B cell (primary cell): ENCODE measurements at regions of chr17 and their contacts with region 1.

Region 1: DNA sequence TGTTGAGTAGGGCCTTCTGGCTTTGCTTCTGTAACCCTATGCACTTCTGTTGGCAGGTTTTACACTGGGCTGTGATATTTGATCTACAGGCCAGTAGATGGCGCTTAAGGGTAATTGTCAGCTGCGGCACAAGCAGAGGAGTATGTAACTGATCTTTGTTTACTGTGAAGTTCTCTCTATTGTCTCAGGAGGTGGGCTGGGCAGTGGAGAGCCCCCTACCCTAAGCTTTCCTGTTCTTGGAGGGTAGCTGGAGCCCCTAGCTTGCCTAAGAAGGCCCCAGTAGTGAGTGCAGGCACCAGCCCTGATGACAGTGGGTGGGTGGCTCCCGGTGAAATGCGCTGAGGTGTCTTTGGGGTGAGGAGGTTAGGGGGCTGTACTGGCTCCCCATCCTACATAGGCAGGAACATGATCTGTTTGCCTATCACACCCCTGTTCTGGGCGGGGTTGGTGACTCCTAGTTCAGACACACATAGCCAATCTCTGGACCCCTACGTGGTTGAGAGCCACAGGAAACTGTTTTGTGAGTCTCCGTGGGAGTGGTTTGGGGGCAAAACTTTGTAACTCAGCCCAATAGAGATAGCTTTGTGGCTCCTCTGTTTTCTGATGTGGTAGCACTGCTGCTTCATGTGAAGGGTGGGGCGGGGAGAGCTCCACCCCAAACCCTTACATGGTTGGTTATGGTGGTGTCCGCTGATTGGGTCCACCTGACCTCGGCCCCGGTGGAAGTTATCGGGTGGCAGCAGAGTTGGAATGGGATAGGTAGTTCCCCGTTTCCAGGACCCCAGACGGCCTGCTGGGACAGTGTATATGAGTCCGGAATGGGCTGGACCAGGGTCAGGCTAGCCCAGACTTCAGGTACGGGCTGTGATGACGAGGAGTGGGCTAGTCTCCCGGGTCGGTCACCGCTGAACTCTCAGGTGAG is 60.4 kb downstream of the SLFN11 start:
- DNase-seq: peak; percentile 86
- ATAC-seq: peak; percentile 82
- H3K4me3 ChIP-seq: peak overlapping the region; percentile 19 to 77 (median 50)
- H3K4me3 Mint-ChIP-seq: peak overlapping the region; percentile 94
- H3K27ac ChIP-seq: peak overlapping the region; percentile 2 to 36
- H3K27ac Mint-ChIP-seq: peak overlapping the region; percentile 92
- H3K4me1 ChIP-seq: peaks cover 8 to 17% of the 10 kb centered on the region in 2 donors
- H3K4me1 Mint-ChIP-seq: peaks cover 18% of the 10 kb centered on the region
- H3K27me3 ChIP-seq: peaks cover 0 to 4% (median 0%) of the 10 kb centered on the region in 4 experiments
- H3K27me3 Mint-ChIP-seq: no peaks in the 10 kb centered on the region
- CTCF ChIP-seq: peak; percentile 86

Region 2: GRCh38 chr17:35273684-35274083 is 39.4 kb before region 1 on chr17:
- CTCF ChIA-PET with region 1: no interaction called
- POLR2A ChIA-PET with region 1: no interaction called
- intact Hi-C with region 1: no loop called
- DNase-seq: no peak
- ATAC-seq: no peak
- H3K4me3 ChIP-seq: no peak overlapping the region
- H3K4me3 Mint-ChIP-seq: no peak overlapping the region
- H3K27ac ChIP-seq: no peak overlapping the region
- H3K27ac Mint-ChIP-seq: no peak overlapping the region
- H3K4me1 ChIP-seq: no peaks in the 10 kb centered on the region
- H3K4me1 Mint-ChIP-seq: no peaks in the 10 kb centered on the region
- H3K27me3 ChIP-seq: peaks cover 0 to 5% (median 0%) of the 10 kb centered on the region in 4 experiments
- H3K27me3 Mint-ChIP-seq: peaks cover 22% of the 10 kb centered on the region
- CTCF ChIP-seq: no peak

Region 3: DNA sequence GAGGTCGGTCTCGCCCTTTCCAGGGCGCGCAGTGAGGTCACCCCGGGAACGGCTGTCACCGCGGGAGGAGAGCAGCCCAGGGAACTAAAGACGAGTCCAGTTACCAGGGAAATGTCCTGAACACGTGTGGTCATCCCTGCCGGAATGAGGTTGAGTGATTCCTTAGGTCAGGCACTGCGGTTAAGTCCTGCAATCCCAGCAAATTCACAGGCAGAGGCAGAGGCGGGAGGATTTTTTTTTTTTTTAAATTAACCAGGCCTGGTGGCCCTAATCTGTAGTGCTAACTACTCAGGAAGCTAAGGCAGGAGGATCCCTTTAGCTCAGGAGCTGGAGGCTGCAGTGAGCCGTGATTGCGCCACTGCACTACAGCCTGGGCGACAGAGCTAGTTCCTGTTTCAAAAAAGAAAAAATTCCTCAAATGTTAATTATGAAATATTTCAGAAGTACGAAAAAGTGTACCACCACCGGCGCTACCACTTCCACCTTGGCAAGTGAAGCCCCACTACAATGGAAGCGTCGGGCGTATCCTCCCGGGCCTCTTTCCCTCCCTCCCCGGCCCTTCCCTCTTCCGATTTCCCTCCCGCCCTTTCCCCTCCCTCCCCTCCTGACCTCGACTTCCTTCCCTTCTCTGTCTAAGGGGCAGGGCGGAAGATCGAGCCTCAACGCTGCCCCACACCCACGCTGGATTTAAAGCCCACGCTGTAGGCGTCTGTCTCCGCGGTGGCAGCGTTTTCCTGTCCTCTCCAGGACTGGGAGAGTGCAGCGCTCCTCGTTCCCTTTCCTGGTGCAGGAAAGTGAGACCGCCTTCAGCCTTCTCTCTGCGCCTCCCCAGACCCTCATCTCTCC is 33.1 kb after region 1 on chr17:
- CTCF ChIA-PET with region 1: interaction called, 9 read pairs
- POLR2A ChIA-PET with region 1: no interaction called
- intact Hi-C with region 1: loop called (anchors 2 kb)
- DNase-seq: peak; percentile 52
- ATAC-seq: peak; percentile 60
- H3K4me3 ChIP-seq: peak overlapping the region; percentile 50 to 80 (median 63)
- H3K4me3 Mint-ChIP-seq: peak overlapping the region; percentile 95
- H3K27ac ChIP-seq: peak overlapping the region; percentile 36 to 59
- H3K27ac Mint-ChIP-seq: peak overlapping the region; percentile 83
- H3K4me1 ChIP-seq: peaks cover 24 to 26% of the 10 kb centered on the region in 2 donors
- H3K4me1 Mint-ChIP-seq: peaks cover 39% of the 10 kb centered on the region
- H3K27me3 ChIP-seq: no peaks in the 10 kb centered on the region
- H3K27me3 Mint-ChIP-seq: no peaks in the 10 kb centered on the region
- CTCF ChIP-seq: no peak

Region 4: GRCh38 chr17:35432176-35433074 is 119.4 kb after region 1 on chr17 and contains the start of gene SLFN12:
- CTCF ChIA-PET with region 1: interaction called, 20 read pairs
- POLR2A ChIA-PET with region 1: interaction called, 4 read pairs
- intact Hi-C with region 1: loop called (anchors 1 kb)
- DNase-seq: peak; percentile 81
- ATAC-seq: peak; percentile 92
- H3K4me3 ChIP-seq: peak within 1 kb of the TSS; percentile 74 to 96 (median 90)
- H3K4me3 Mint-ChIP-seq: peak within 1 kb of the TSS; percentile 99
- H3K27ac ChIP-seq: peak within 1 kb of the TSS; percentile 38 to 65
- H3K27ac Mint-ChIP-seq: peak within 1 kb of the TSS; percentile 95
- H3K4me1 ChIP-seq: peaks cover 18 to 22% of the 10 kb centered on the region in 2 donors
- H3K4me1 Mint-ChIP-seq: peaks cover 24% of the 10 kb centered on the region
- H3K27me3 ChIP-seq: no peaks in the 10 kb centered on the region
- H3K27me3 Mint-ChIP-seq: no peaks in the 10 kb centered on the region
- CTCF ChIP-seq: no peak
- total RNA-seq, gene SLFN12: 8.0 and 10.4 TPM in 2 replicates

Region 5: DNA sequence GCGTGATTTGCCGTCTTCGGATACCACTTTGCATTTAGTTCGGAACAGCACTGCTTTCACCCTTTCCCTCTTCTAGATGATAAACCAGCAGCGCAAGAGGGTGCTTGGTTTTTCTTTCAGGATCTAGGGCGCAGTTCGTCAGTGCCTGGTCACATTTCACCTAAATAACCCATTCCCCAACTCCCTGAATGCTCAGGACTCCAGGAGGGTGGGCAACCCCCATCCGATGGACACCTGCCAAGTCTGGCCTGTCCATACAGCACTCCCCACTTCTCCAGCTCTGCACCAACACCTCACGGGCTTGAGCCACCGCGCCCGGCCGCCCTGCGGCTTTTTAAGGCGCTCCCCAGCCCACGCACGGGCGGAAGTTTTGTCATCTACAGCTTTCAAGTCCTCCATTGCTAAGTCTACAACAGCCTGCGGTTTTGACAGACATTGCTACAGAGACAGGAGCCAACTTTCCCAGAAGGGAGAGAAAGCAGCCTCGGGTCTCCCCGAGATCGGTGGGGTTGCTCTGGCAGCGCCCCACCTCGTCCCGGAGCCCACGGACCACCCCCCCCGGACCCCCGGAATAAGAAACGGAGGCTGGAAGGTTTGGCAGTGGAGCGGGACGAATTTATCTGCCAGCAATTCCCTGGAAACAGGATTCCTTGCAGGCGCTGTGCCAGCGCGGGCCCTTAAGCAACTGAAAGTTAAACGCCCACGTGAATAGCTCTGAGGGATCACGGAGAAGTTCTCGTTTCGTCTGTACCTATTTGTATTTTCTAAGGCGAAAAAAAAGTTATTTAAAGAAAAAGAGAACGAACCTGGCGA is 174.1 kb after region 1 on chr17:
- CTCF ChIA-PET with region 1: interaction called, 59 read pairs
- POLR2A ChIA-PET with region 1: interaction called, 7 read pairs
- intact Hi-C with region 1: loop called (anchors 1 kb)
- DNase-seq: peak; percentile 65
- ATAC-seq: peak; percentile 53
- H3K4me3 ChIP-seq: peak overlapping the region; percentile 67 to 94 (median 79)
- H3K4me3 Mint-ChIP-seq: peak overlapping the region; percentile 98
- H3K27ac ChIP-seq: no peak overlapping the region
- H3K27ac Mint-ChIP-seq: peak overlapping the region; percentile 87
- H3K4me1 ChIP-seq: peaks cover 22 to 23% of the 10 kb centered on the region in 2 donors
- H3K4me1 Mint-ChIP-seq: peaks cover 25% of the 10 kb centered on the region
- H3K27me3 ChIP-seq: peaks cover 0 to 44% (median 35%) of the 10 kb centered on the region in 4 experiments
- H3K27me3 Mint-ChIP-seq: peaks cover 36% of the 10 kb centered on the region
- CTCF ChIP-seq: no peak

Region 6: DNA sequence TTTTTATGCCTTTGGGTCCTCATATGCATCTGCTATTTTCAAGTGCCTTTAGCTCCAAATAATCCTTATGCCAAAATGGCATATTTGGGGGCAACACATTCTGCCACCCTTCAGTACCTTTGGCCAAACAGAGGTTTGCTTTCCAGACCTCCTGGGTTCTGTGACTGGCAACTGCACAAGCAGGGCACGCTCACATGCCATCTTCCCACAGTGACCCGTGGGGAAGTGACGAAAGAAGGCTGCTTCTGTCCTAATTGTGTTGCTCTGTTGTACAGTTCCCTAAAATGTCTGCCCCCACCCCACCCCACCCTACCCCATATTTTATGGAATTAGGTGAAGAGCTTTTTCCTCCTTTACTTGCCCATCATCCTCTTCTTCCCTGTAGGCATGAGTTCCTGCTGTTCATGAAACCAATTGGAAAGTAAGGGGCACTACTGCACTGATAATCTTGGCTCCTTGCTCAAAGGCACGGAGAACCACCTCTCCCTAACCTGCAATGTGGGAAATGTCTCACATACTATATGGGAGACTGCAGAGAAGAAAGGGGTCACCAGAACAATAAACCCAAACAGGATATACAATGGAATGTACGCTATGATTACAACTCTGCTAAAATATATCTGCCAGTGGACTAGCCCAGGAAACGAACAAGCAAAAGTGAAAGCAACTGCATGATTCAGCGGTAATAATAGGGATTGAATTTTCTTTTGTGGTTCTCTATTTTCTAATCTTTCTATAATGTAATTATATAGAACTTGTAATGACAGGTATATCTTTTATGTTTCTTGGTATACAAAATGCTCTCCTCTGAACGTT is 227.7 kb after region 1 on chr17:
- CTCF ChIA-PET with region 1: interaction called, 360 read pairs
- POLR2A ChIA-PET with region 1: interaction called, 3 read pairs
- intact Hi-C with region 1: loop called (anchors 1 kb)
- DNase-seq: peak; percentile 70
- ATAC-seq: peak; percentile 79
- H3K4me3 ChIP-seq: peak overlapping the region; percentile 58 to 90 (median 70)
- H3K4me3 Mint-ChIP-seq: peak overlapping the region; percentile 89
- H3K27ac ChIP-seq: peak overlapping the region; percentile 75 to 84
- H3K27ac Mint-ChIP-seq: peak overlapping the region; percentile 87
- H3K4me1 ChIP-seq: peaks cover 24 to 33% of the 10 kb centered on the region in 2 donors
- H3K4me1 Mint-ChIP-seq: peaks cover 39% of the 10 kb centered on the region
- H3K27me3 ChIP-seq: no peaks in the 10 kb centered on the region
- H3K27me3 Mint-ChIP-seq: no peaks in the 10 kb centered on the region
- CTCF ChIP-seq: no peak

Region 7: DNA sequence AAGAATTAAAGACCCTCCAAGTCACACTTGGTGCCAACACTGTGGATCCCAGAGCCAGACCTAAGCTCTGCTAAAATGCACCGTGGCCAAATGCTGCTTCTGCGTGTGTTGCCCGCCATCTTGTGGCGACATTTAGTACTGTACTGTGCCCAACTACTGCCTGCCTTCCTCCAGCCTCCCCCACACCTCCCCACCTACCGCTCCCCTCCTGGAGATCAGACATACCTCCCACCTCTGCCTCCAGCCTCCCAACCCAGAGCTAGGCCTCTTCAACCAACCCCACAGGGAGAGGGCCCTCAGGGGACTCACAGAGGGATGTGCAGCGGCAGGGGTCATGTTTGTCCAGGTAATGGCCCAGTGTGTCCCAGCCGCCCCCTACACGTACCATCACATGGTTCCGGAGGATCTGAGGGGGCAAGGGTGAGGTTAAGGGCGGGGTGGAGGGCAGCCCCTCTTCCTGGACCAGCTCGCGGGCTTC is 434.5 kb after region 1 on chr17:
- CTCF ChIA-PET with region 1: no interaction called
- POLR2A ChIA-PET with region 1: no interaction called
- intact Hi-C with region 1: loop called (anchors 2 kb)
- DNase-seq: peak; percentile 84
- ATAC-seq: peak; percentile 92
- H3K4me3 ChIP-seq: no peak overlapping the region
- H3K4me3 Mint-ChIP-seq: no peak overlapping the region
- H3K27ac ChIP-seq: no peak overlapping the region
- H3K27ac Mint-ChIP-seq: no peak overlapping the region
- H3K4me1 ChIP-seq: peaks cover 3 to 10% of the 10 kb centered on the region in 2 donors
- H3K4me1 Mint-ChIP-seq: peaks cover 6% of the 10 kb centered on the region
- H3K27me3 ChIP-seq: peaks cover 0 to 51% (median 23%) of the 10 kb centered on the region in 4 experiments
- H3K27me3 Mint-ChIP-seq: peaks cover 51% of the 10 kb centered on the region
- CTCF ChIP-seq: peak; percentile 88